Upper lobe of right lung (tissue), 1 donor: ENCODE measurements at regions of chr2 and their contacts with region 1.

Region 1: DNA sequence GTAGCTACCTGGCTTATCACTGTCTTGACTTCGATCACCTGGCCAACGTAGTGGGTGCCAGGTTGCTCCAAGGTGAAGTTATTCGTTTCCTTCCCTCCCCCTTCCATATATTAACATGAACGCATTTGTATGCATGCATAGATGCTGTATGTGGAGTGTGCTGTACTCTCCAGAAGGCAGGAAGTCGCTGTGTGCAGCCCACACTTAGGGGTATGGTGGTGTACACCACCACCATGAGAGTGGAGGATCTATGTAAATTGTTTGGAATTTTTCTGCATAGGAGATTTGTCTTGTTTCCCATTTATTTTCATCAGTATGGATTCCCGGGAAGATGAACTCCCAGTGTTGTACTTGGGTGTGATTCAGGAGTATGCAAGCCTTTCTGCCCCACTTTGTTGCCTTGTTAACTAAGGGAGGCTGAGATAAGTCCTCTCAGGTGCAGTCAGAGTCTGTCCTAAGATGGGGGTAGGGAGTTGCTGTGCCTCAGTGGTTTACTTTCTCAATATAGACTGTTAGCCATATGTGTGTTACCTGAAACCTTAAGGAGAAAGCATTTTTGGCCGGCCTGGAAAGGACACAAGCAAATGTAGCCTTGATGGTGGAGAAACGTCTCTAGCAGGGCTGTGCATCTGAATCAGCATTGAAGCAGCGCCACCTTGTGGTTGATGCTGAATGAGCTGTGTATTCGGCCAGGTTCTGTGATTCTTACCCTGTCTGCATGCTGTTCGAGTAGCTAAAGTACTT is 149.8 kb downstream of the TANC1 start:
- DNase-seq: peak; percentile 87
- ATAC-seq: peak; percentile 93
- H3K4me3 ChIP-seq: no peak overlapping the region
- H3K27ac ChIP-seq: no peak overlapping the region
- H3K4me1 ChIP-seq: peaks cover 21% of the 10 kb centered on the region
- H3K27me3 ChIP-seq: no peaks in the 10 kb centered on the region
- CTCF ChIP-seq: peak; percentile 92

Region 2: GRCh38 chr2:158781353-158781961 is 336.8 kb before region 1 on chr2:
- intact Hi-C with region 1: no loop called
- DNase-seq: no peak
- ATAC-seq: peak; percentile 44
- H3K4me3 ChIP-seq: no peak overlapping the region
- H3K27ac ChIP-seq: no peak overlapping the region
- H3K4me1 ChIP-seq: no peaks in the 10 kb centered on the region
- H3K27me3 ChIP-seq: no peaks in the 10 kb centered on the region
- CTCF ChIP-seq: no peak

Region 3: DNA sequence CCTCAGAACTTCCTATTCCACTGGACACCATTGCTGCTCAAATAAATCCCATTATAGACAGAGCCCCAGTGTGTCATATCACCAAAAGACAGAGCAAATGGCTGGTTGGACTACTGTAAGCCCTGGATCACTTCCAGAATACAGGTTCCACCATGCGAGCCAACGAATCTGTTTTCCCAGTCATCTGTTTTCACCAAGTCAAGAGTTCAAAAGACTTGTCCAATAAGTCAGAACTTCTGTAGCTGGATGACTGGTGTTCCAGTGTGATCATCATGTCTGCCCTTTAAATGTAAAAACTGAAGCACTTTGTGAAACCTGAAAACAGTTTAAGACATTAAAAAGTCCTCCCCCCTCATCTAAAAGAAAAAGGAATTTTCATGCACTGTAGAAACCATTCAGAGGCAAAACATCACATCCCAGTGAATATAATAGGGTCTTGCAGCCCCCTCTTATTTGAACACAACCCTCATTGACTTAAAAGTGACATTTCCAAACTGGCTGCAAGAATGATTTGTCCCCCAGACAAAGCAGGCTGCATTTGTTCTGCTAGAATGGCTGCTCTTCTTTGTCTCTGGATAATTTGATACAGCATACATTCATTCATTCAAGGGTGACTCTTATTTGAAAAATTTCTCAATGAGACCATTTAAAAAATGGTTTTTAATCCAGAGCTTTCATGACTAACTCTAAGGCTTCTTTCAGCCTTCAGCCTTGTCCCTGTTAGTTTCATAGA is 214.4 kb before region 1 on chr2:
- intact Hi-C with region 1: loop called (anchors 5 kb)
- DNase-seq: no peak
- ATAC-seq: no peak
- H3K4me3 ChIP-seq: no peak overlapping the region
- H3K27ac ChIP-seq: no peak overlapping the region
- H3K4me1 ChIP-seq: no peaks in the 10 kb centered on the region
- H3K27me3 ChIP-seq: no peaks in the 10 kb centered on the region
- CTCF ChIP-seq: no peak

Region 4: DNA sequence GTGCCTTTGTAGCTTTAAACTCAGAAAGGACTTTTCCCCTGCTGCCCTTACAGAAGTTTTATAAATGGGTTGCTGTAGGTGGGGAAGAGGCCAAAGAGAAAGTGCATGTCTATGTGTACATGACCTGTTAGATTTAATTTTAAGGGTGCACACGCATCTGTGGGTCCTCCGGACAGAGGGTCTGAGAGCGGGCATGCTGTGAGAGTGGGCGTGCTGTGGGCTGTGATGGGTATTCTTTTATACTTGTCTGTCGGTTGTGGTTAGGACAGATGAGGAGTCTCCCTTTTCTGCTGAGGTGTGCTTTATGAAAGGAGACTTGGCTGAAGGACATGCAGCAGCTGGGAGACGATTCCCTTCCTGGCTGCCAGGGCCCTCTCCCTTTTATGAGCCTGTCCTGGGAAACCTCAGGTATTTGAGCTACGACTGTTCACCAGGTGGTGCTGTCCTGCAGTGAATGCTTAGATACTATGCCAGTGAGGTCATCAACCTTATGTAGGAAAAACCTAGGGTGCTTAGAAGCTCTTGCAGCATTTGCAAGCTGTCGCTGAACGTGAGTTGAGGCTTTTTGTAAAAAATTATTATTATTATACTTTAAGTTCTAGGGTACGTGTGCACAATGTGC is 82.4 kb before region 1 on chr2:
- intact Hi-C with region 1: no loop called
- DNase-seq: no peak
- ATAC-seq: peak; percentile 94
- H3K4me3 ChIP-seq: no peak overlapping the region
- H3K27ac ChIP-seq: peak overlapping the region; percentile 36
- H3K4me1 ChIP-seq: peaks cover 32% of the 10 kb centered on the region
- H3K27me3 ChIP-seq: no peaks in the 10 kb centered on the region
- CTCF ChIP-seq: peak; percentile 35

Region 5: GRCh38 chr2:159053161-159054031 is 64.9 kb before region 1 on chr2:
- intact Hi-C with region 1: loop called (anchors 10 kb)
- DNase-seq: no peak
- ATAC-seq: no peak
- H3K4me3 ChIP-seq: no peak overlapping the region
- H3K27ac ChIP-seq: no peak overlapping the region
- H3K4me1 ChIP-seq: no peaks in the 10 kb centered on the region
- H3K27me3 ChIP-seq: no peaks in the 10 kb centered on the region
- CTCF ChIP-seq: no peak